HepG2 (cell line): ENCODE measurements at regions of chr16 and their contacts with region 1.

Region 1: GRCh38 chr16:21263640-21264570 is 14.2 kb downstream of the CRYM start:
- DNase-seq: peak; percentile 81
- ATAC-seq: peak; percentile 76
- H3K4me3 ChIP-seq: peak overlapping the region; percentile 23 to 50 (median 45)
- H3K27ac ChIP-seq: peak overlapping the region; percentile 46
- H3K4me1 ChIP-seq: peaks cover 68% of the 10 kb centered on the region
- H3K27me3 ChIP-seq: no peaks in the 10 kb centered on the region
- CTCF ChIP-seq: peak; percentile 38
- EP300 ChIP-seq: no peak
- POLR2A ChIP-seq: peak; percentile 40 to 60; a peak in 3 of 4 replicates
- RAD21 ChIP-seq: no peak

Region 2: DNA sequence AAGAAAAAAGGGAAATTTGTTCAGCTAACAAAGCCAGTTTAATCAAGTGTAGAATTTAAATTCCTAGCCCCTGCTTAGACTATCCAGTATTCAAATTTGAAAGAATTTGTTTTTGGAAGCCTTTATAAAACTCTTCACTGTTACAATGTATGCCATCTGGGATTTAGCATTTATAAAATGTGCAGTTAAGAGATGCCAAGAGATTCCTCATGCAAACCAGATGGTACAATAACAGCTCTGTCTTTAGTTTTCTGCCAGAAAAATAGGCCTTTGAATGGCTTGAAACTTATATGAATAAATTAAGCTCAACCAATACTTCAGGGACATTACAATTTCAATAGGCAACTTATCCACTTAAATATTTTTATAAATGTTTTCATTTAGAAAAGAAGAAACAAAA is 37.2 kb before region 1 on chr16:
- CTCF ChIA-PET with region 1: no interaction called
- POLR2A ChIA-PET with region 1: interaction called, 11 read pairs
- in situ Hi-C with region 1: no loop called
- intact Hi-C with region 1: no loop called
- DNase-seq: no peak
- ATAC-seq: no peak
- H3K4me3 ChIP-seq: no peak overlapping the region
- H3K27ac ChIP-seq: no peak overlapping the region
- H3K4me1 ChIP-seq: peaks cover 51% of the 10 kb centered on the region
- H3K27me3 ChIP-seq: no peaks in the 10 kb centered on the region; a peak in 1 of 5 replicates
- CTCF ChIP-seq: no peak
- EP300 ChIP-seq: no peak
- POLR2A ChIP-seq: no peak
- RAD21 ChIP-seq: no peak

Region 3: GRCh38 chr16:21244518-21245215 is 19.2 kb before region 1 on chr16:
- CTCF ChIA-PET with region 1: no interaction called
- POLR2A ChIA-PET with region 1: interaction called, 4 read pairs
- in situ Hi-C with region 1: no loop called
- intact Hi-C with region 1: loop called (anchors 2 kb)
- DNase-seq: no peak
- ATAC-seq: peak; percentile 45; the same call in 1 of the 3 replicates
- H3K4me3 ChIP-seq: no peak overlapping the region
- H3K27ac ChIP-seq: peak overlapping the region; percentile 14
- H3K4me1 ChIP-seq: peaks cover 43% of the 10 kb centered on the region
- H3K27me3 ChIP-seq: no peaks in the 10 kb centered on the region
- CTCF ChIP-seq: no peak
- EP300 ChIP-seq: no peak
- POLR2A ChIP-seq: no peak
- RAD21 ChIP-seq: no peak

Region 4: GRCh38 chr16:21338537-21339268 is 74.8 kb after region 1 on chr16:
- CTCF ChIA-PET with region 1: no interaction called
- POLR2A ChIA-PET with region 1: no interaction called
- in situ Hi-C with region 1: no loop called
- intact Hi-C with region 1: no loop called
- DNase-seq: peak; percentile 87
- ATAC-seq: peak; percentile 94
- H3K4me3 ChIP-seq: peak overlapping the region in 2 of 3 experiments; percentile 8 to 29; a peak in 2 of 6 replicates
- H3K27ac ChIP-seq: peak overlapping the region; percentile 56
- H3K4me1 ChIP-seq: peaks cover 64% of the 10 kb centered on the region
- H3K27me3 ChIP-seq: no peaks in the 10 kb centered on the region
- CTCF ChIP-seq: no peak
- EP300 ChIP-seq: peak in 1 of 2 experiments; percentile 59; a peak in 1 of 4 replicates
- POLR2A ChIP-seq: no peak
- RAD21 ChIP-seq: peak; percentile 37; the same call in 1 of the 2 replicates